ENCODE measurements at regions of chr4 and their contacts with region 1.

Region 1: DNA sequence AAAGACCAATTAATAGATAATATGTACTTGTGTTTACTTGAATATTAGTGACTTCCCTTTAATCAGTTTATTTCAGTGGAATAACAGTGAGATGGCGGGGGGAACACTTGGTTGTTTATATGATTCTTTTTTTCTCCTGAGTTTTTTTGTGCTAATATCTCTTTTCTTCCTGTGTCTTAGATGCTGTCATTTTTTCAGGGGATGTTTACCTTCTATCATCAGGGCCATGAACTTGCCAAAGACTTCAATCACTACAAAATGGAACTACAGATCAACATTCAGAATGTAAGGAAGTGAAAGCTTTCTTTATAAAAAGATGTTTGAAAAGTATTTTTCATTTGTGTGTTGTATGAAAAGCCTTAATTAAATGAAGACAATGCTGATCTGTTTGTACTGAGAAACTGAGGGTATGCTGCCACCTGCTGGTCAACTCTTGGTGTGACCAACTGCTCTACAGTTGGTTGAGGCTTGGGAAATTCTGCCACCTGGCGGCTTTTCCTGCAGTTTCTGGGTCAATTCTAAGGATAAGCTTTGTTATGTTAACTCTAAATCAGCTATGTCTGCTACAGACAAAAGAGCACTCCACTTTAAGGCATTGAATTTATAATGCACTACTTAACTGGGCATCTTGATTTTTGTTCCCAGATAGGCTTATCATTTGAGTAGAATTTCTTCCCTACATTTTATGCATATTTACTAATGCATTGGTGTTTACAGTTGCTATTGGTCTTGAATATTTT is 134.8 kb downstream of the ARHGAP10 start:
- DNase-seq: peak; percentile 88 to 99 (median 95)
- H3K4me3 ChIP-seq: no peak overlapping the region
- H3K27ac ChIP-seq: peak overlapping the region in 2 of 5 donors; percentile 7 to 18
- H3K4me1 ChIP-seq: peaks cover 4 to 26% of the 10 kb centered on the region in 2 donors
- H3K27me3 ChIP-seq: no peaks in the 10 kb centered on the region
- CTCF ChIP-seq: peak; percentile 98 to 100 (median 100)
- POLR2A ChIP-seq: peak in 1 of 2 donors; percentile 37

Region 2: GRCh38 chr4:147638942-147639341 is 227.8 kb before region 1 on chr4:
- intact Hi-C with region 1: no loop called
- DNase-seq: no peak
- H3K4me3 ChIP-seq: no peak overlapping the region
- H3K27ac ChIP-seq: no peak overlapping the region
- H3K4me1 ChIP-seq: no peaks in the 10 kb centered on the region
- H3K27me3 ChIP-seq: no peaks in the 10 kb centered on the region
- CTCF ChIP-seq: no peak
- POLR2A ChIP-seq: no peak

Region 3: GRCh38 chr4:147707865-147708672 is 158.6 kb before region 1 on chr4:
- intact Hi-C with region 1: loop called (anchors 5 kb)
- DNase-seq: peak; percentile 39 to 85 (median 57)
- H3K4me3 ChIP-seq: peak overlapping the region in 1 of 4 donors; percentile 17
- H3K27ac ChIP-seq: no peak overlapping the region
- H3K4me1 ChIP-seq: no peaks in the 10 kb centered on the region
- H3K27me3 ChIP-seq: no peaks in the 10 kb centered on the region
- CTCF ChIP-seq: peak; percentile 84 to 97 (median 94)
- POLR2A ChIP-seq: no peak

Region 4: GRCh38 chr4:147924604-147925412 is 58.1 kb after region 1 on chr4:
- intact Hi-C with region 1: no loop called
- DNase-seq: peak; percentile 27 to 77 (median 45)
- H3K4me3 ChIP-seq: no peak overlapping the region
- H3K27ac ChIP-seq: no peak overlapping the region
- H3K4me1 ChIP-seq: peaks cover 0 to 9% of the 10 kb centered on the region in 2 donors
- H3K27me3 ChIP-seq: no peaks in the 10 kb centered on the region
- CTCF ChIP-seq: peak; percentile 38 to 52 (median 48)
- POLR2A ChIP-seq: no peak

Region 5: DNA sequence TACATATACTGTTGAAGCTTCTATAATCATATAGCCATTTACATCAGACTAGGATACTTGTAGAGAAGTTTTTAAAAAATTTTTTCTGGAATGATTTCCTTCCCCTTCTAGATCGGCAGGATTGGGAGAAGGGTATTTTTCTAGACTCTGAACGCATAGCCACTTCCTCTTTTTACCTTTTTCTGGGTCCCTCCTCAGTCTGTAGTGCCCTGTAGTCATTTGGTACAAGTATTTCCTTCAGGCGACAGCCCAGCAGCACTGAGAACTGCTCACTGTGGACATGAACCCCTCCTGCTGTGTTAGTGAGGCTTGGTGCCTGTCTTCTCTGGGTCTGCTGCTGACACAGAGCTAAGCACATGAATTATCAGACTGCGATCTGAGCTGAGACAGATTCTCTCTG is 120.5 kb after region 1 on chr4:
- intact Hi-C with region 1: no loop called
- DNase-seq: no peak
- H3K4me3 ChIP-seq: no peak overlapping the region
- H3K27ac ChIP-seq: no peak overlapping the region
- H3K4me1 ChIP-seq: no peaks in the 10 kb centered on the region
- H3K27me3 ChIP-seq: no peaks in the 10 kb centered on the region
- CTCF ChIP-seq: no peak
- POLR2A ChIP-seq: no peak

Measured in adrenal gland (tissue), 19 donors.